ENCODE measurements at regions of chr2 and their contacts with region 1.

Region 1: DNA sequence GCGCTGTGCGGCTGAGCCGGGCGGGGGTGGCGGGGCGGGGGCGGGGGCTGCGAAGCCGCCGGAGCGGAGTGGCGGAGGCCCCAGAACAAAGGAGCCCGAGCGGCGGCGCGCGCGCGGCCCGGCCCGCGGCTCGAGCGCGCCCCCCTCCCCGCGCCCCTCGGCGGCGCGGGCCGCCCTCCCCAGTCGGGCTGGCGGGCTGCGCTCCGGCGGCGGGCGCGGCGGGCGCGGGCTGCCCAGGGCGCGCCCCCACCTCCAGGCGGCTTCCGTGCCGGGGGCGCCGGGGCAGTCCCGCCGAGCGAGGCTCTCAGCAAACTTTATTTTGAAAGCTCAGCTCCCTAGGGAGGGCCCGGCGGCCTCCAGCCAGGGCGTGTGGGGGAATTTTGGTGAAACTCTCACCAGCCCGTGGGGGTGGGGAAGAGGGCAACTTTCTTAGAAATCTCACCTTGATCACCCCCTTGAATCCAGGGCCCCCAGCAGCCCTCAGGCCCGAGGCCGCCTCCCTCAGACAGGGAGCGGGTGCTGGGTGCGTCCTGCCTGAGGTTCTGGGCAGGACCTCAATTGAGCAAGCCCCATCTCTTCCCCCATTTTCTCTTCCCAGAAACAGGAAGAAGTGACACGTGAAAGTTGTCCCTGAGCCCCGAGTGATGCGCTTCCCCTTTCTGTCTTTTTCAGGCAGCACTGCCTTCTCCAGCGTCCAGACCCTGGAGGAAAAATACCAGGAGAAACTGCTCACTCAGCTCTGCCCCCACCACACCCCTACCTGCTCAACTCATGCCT is 786 bp downstream of the TET3 start:
- DNase-seq: peak; percentile 80
- ATAC-seq: peak; percentile 38

Region 2: GRCh38 chr2:73700131-73700611 is 285.3 kb before region 1 on chr2:
- intact Hi-C with region 1: no loop called
- DNase-seq: no peak
- ATAC-seq: peak; percentile 33

Region 3: DNA sequence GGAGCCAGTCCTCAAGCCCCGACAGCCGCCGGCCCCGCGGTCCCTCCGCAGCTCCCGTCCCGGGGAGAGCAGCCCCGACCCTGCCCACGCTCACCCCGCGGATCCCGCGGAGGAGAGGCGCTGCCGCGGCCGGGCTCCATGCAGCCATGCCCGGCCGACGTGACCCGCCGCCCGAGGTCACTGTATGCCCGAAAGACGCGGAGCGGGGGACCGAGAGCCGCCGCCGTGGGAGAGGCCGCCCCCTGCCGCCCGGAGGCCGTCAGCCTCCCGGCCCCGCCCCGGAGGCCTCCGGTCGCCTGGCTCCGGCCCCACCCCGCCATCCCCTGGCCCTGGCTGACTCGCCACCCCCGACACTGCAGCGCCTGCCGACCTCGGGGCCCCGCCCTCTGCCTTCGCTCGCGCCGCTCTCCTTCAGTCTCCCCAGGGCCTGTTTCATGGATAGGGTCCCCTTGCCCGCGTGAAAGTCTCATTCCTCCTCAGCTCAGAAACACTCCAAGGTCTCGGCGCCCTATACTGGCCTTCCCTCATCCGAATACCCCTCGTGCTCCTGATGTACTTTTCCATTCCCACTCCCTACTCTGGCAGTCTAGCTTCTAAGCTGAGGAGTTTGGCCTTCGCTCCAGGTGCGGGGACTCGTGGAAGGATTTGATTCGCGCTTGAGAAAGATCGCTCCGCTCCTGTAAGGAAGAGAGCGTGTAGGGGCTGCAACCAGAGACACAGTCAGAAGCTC is 162.4 kb after region 1 on chr2 and contains the start of gene BOLA3:
- intact Hi-C with region 1: loop called (anchors 5 kb)
- DNase-seq: peak; percentile 93
- ATAC-seq: peak; percentile 95
- total RNA-seq, gene BOLA3: 88.4 TPM

Region 4: GRCh38 chr2:74317701-74318301 is 332.3 kb after region 1 on chr2:
- intact Hi-C with region 1: no loop called
- DNase-seq: no peak
- ATAC-seq: no peak